Left ventricle myocardium superior (tissue), 1 donor: ENCODE measurements at regions of chr10 and their contacts with region 1.

Region 1: GRCh38 chr10:60200012-60200681 is 189.5 kb downstream of the ANK3 start:
- DNase-seq: no peak
- ATAC-seq: peak; percentile 55

Region 2: GRCh38 chr10:60176925-60177324 is 23.2 kb before region 1 on chr10:
- intact Hi-C with region 1: loop called (anchors 1 kb)
- DNase-seq: no peak
- ATAC-seq: no peak

Region 3: DNA sequence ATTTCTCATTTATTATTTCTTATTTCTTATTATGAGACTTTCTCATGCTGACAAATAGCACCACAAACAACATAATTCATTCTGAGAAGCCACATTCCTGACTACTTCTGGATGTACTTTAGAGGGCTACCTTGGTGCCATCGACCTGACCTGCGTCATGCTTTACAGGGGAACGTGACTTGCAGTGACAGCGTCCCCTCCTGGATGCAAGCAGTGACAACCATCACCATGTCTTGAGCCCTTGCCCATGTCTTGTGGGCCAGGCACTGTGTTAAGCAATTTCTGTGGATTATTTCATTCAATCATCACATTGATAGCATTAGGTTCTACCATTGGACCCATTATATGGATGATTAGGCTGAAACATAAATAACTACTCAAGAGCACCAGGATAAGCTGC is 52.5 kb after region 1 on chr10:
- intact Hi-C with region 1: no loop called
- DNase-seq: no peak
- ATAC-seq: no peak